ENCODE measurements at regions of chr11 and their contacts with region 1.

Region 1: GRCh38 chr11:62394825-62395538 is 23.9 kb upstream of the SCGB1A1 start:
- DNase-seq: peak; percentile 71 to 75
- H3K4me3 ChIP-seq: no peak overlapping the region
- H3K27ac ChIP-seq: no peak overlapping the region
- H3K4me1 ChIP-seq: peaks cover 27% of the 10 kb centered on the region
- H3K27me3 ChIP-seq: no peaks in the 10 kb centered on the region
- CTCF ChIP-seq: peak; percentile 91

Region 2: DNA sequence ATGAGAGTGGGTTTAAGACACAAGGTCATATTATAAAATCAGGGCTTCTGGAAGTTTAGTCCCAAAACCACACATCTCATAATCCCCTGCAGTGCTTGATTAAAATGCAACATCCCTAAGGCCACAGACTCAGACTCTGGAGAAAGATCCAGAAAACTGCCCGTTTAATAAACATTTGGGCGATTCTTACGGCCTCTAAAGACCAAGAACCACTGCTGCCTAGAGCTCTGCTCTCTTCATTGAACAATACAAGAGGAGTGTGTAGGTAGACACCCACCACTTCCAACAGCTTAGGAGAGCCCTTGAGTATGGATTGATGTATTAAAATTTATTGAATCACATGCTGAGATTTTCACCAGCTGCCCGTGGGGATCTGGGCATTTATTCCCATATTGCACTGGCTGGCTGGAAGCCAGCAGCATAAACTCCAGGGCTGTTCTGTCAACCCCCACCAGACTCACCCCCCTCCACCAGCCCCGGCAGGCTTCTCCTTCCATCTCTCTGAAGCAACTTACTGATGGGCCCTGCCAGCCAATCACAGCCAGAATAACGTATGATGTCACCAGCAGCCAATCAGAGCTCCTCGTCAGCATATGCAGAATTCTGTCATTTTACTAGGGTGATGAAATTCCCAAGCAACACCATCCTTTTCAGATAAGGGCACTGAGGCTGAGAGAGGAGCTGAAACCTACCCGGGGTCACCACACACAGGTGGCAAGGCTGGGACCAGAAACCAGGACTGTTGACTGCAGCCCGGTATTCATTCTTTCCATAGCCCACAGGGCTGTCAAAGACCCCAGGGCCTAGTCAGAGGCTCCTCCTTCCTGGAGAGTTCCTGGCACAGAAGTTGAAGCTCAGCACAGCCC is 445.6 kb before region 1 on chr11:
- CTCF ChIA-PET with region 1: no interaction called
- POLR2A ChIA-PET with region 1: no interaction called
- intact Hi-C with region 1: no loop called
- DNase-seq: peak in 1 of 2 experiments; percentile 37
- H3K4me3 ChIP-seq: no peak overlapping the region
- H3K27ac ChIP-seq: peak overlapping the region; percentile 49
- H3K4me1 ChIP-seq: peaks cover 23% of the 10 kb centered on the region
- H3K27me3 ChIP-seq: no peaks in the 10 kb centered on the region
- CTCF ChIP-seq: no peak

Region 3: DNA sequence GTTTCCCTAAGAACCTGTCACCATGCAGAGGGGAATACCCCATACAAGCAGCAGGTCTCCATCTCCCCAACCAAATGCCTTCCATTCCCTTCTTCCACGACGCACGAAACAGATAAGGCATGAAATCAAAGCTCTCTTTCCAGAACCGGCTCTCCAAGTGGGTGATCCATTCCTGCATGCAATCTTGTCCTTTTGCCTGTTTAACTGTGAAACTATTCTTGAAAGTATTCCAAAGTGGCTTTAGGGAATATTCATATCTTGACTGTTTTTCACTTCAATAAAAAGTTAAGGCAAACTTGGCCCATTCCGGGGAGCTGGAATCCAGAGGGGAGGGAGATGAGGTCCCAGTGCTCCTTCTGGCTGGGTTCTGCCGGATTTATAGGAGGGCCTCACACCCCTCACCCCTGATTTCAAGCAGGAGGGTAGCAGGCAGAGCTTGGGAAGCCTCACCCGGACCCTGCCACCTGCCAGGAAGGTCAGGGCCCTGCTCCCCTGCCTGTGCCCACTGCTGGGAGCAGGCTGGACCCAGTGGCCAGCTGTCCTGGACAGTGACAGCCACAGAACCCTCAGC is 84.7 kb after region 1 on chr11:
- CTCF ChIA-PET with region 1: interaction called, 5 read pairs
- POLR2A ChIA-PET with region 1: no interaction called
- intact Hi-C with region 1: loop called (anchors 1 kb)
- DNase-seq: no peak
- H3K4me3 ChIP-seq: peak overlapping the region; percentile 36; the same call in 1 of the 2 replicates
- H3K27ac ChIP-seq: peak overlapping the region; percentile 95
- H3K4me1 ChIP-seq: peaks cover 42% of the 10 kb centered on the region
- H3K27me3 ChIP-seq: no peaks in the 10 kb centered on the region
- CTCF ChIP-seq: no peak

Region 4: GRCh38 chr11:62601394-62602140 is 206.6 kb after region 1 on chr11 and contains the start of gene MTA2:
- CTCF ChIA-PET with region 1: interaction called, 17 read pairs
- POLR2A ChIA-PET with region 1: no interaction called
- intact Hi-C with region 1: no loop called
- DNase-seq: peak; percentile 97 to 100
- H3K4me3 ChIP-seq: peak within 1 kb of the TSS; percentile 95
- H3K27ac ChIP-seq: peak within 1 kb of the TSS; percentile 67
- H3K4me1 ChIP-seq: peaks cover 17% of the 10 kb centered on the region
- H3K27me3 ChIP-seq: no peaks in the 10 kb centered on the region
- CTCF ChIP-seq: no peak
- total RNA-seq, gene MTA2: 96.6 and 120 TPM in 2 replicates

Region 5: DNA sequence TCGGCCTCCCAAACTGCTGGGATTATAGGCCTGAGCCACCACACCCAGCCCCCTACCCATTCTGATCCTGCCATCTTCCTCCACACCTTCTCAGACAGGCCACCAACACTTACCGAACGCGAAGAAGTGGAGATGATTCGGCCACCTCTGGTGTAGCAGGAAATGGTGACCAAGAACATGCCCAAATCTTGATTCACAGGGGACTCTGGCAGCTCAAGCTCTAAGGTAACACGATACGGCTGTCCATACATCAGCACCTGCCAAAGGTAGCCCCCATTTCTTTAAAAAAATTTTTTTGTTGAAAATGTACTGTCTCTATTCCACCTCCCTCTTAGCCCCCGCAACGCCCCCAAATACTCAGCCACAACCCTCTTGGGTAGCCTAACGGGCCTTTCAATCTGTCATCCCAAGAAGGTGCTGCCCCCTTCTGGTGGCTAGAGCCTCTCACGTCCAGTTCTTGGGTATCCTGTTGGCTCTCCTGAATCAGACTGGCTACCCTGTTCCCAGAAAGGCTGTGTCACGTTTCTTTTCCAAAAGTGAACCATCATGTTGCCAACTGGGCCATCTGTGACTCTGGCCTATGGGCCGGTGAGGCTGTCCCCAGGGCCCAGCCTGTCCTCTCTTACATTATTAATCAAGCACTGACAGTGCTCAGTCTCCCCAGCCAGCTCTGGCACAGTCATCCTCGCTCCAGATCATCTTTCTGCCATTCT is 299.6 kb after region 1 on chr11:
- CTCF ChIA-PET with region 1: no interaction called
- POLR2A ChIA-PET with region 1: no interaction called
- intact Hi-C with region 1: loop called (anchors 1 kb)
- DNase-seq: peak in 1 of 2 experiments; percentile 55
- H3K4me3 ChIP-seq: no peak overlapping the region
- H3K27ac ChIP-seq: no peak overlapping the region
- H3K4me1 ChIP-seq: no peaks in the 10 kb centered on the region
- H3K27me3 ChIP-seq: no peaks in the 10 kb centered on the region
- CTCF ChIP-seq: peak; percentile 86

Region 6: GRCh38 chr11:62805076-62805892 is 410.3 kb after region 1 on chr11 and contains the start of gene NXF1:
- CTCF ChIA-PET with region 1: no interaction called
- POLR2A ChIA-PET with region 1: no interaction called
- intact Hi-C with region 1: no loop called
- DNase-seq: peak; percentile 87 to 98
- H3K4me3 ChIP-seq: peak within 1 kb of the TSS; percentile 94
- H3K27ac ChIP-seq: peak within 1 kb of the TSS; percentile 16
- H3K4me1 ChIP-seq: peaks cover 20% of the 10 kb centered on the region
- H3K27me3 ChIP-seq: no peaks in the 10 kb centered on the region
- CTCF ChIP-seq: no peak
- total RNA-seq, gene NXF1: 45.6 and 56.1 TPM in 2 replicates

Region 7: DNA sequence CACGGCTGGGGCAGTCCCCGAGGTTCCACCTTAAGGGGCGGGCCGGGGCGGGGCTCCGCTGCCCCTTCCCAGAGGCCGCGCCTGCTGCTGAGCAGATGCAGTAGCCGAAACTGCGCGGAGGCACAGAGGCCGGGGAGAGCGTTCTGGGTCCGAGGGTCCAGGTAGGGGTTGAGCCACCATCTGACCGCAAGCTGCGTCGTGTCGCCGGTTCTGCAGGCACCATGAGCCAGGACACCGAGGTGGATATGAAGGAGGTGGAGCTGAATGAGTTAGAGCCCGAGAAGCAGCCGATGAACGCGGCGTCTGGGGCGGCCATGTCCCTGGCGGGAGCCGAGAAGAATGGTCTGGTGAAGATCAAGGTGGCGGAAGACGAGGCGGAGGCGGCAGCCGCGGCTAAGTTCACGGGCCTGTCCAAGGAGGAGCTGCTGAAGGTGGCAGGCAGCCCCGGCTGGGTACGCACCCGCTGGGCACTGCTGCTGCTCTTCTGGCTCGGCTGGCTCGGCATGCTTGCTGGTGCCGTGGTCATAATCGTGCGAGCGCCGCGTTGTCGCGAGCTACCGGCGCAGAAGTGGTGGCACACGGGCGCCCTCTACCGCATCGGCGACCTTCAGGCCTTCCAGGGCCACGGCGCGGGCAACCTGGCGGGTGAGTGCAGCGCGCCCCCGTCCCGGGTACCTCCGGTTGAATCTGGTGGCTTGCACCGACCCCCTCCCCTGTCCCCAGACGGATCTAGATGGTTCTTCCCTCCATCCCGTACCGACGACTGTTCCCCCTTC is 486.0 kb after region 1 on chr11 and contains the start of gene SLC3A2:
- CTCF ChIA-PET with region 1: interaction called, 3 read pairs
- POLR2A ChIA-PET with region 1: no interaction called
- intact Hi-C with region 1: loop called (anchors 5 kb)
- DNase-seq: peak; percentile 85 to 90
- H3K4me3 ChIP-seq: peak within 1 kb of the TSS; percentile 69
- H3K27ac ChIP-seq: peak within 1 kb of the TSS; percentile 96
- H3K4me1 ChIP-seq: peaks cover 48% of the 10 kb centered on the region
- H3K27me3 ChIP-seq: no peaks in the 10 kb centered on the region
- CTCF ChIP-seq: peak; percentile 68
- total RNA-seq, gene SLC3A2: 513 and 619 TPM in 2 replicates

Measured in PC-9 (cell line).